B cell (primary cell): ENCODE measurements at regions of chr19 and their contacts with region 1.

Region 1: GRCh38 chr19:57682226-57682766 is 519 bp downstream of the ZNF551 start:
- DNase-seq: no peak
- ATAC-seq: no peak
- H3K4me3 ChIP-seq: peak overlapping the region; percentile 65 to 98 (median 90)
- H3K4me3 Mint-ChIP-seq: peak overlapping the region; percentile 98
- H3K27ac ChIP-seq: peak overlapping the region; percentile 50 to 57
- H3K27ac Mint-ChIP-seq: peak overlapping the region; percentile 91
- H3K4me1 ChIP-seq: peaks cover 13 to 25% of the 10 kb centered on the region in 2 donors
- H3K4me1 Mint-ChIP-seq: peaks cover 38% of the 10 kb centered on the region
- H3K27me3 ChIP-seq: peaks cover 0 to 4% (median 0%) of the 10 kb centered on the region in 4 experiments
- H3K27me3 Mint-ChIP-seq: peaks cover 15% of the 10 kb centered on the region
- CTCF ChIP-seq: no peak

Region 2: DNA sequence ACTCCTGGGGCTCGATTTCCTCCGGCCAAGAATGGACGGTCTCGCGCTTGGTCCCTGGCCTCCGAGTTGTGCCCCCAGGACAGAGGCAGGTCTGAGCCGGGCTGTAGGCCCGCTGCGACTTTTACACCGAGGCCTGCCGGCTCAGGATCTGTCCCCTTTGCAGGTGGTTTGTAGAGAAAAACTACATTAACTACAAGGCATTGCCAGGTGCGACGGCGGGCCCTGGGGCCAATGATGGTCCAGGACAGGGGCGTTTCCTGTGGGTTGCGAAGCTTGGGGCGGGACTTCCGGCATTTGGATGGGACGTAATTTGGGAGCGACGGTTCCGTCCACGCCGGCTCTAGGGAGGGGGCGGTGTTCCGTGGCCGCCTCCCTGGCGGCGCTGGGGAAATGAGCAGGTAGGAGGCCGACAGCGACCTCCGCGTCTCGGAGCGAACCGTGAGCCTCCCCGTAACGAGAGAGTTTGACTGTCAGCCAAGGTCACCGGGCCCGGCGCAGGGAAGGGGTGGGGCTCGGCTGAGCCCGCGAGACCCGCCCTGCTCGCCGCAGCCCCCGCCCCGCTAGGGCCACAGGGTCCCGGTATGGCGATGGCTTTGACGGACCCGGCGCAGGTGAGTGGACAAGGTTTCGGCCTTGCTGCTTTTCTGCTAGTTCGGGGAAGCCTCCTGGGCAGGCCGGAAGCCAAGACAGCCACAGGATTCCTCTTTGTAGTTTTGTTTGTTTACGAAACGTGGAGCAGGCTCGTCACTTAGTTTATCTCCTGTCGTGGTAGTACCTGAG is 441.8 kb before region 1 on chr19 and contains the start of gene ZNF805:
- CTCF ChIA-PET with region 1: no interaction called
- POLR2A ChIA-PET with region 1: no interaction called
- intact Hi-C with region 1: loop called (anchors 5 kb)
- DNase-seq: peak; percentile 97
- ATAC-seq: peak; percentile 93
- H3K4me3 ChIP-seq: peak within 1 kb of the TSS; percentile 64 to 99 (median 94)
- H3K4me3 Mint-ChIP-seq: peak within 1 kb of the TSS; percentile 95
- H3K27ac ChIP-seq: peak within 1 kb of the TSS; percentile 77 to 86
- H3K27ac Mint-ChIP-seq: peak within 1 kb of the TSS; percentile 94
- H3K4me1 ChIP-seq: peaks cover 19 to 20% of the 10 kb centered on the region in 2 donors
- H3K4me1 Mint-ChIP-seq: peaks cover 33% of the 10 kb centered on the region
- H3K27me3 ChIP-seq: no peaks in the 10 kb centered on the region
- H3K27me3 Mint-ChIP-seq: no peaks in the 10 kb centered on the region
- CTCF ChIP-seq: no peak
- total RNA-seq, gene ZNF805: 18.9 and 20.0 TPM in 2 replicates

Region 3: GRCh38 chr19:57410877-57411671 is 271.2 kb before region 1 on chr19 and contains the start of gene ZNF17:
- CTCF ChIA-PET with region 1: no interaction called
- POLR2A ChIA-PET with region 1: no interaction called
- intact Hi-C with region 1: loop called (anchors 1 kb)
- DNase-seq: peak; percentile 93
- ATAC-seq: peak; percentile 100
- H3K4me3 ChIP-seq: peak within 1 kb of the TSS; percentile 66 to 98 (median 89)
- H3K4me3 Mint-ChIP-seq: peak within 1 kb of the TSS; percentile 97
- H3K27ac ChIP-seq: peak within 1 kb of the TSS; percentile 22 to 77
- H3K27ac Mint-ChIP-seq: peak within 1 kb of the TSS; percentile 89
- H3K4me1 ChIP-seq: peaks cover 12 to 17% of the 10 kb centered on the region in 2 donors
- H3K4me1 Mint-ChIP-seq: peaks cover 26% of the 10 kb centered on the region
- H3K27me3 ChIP-seq: no peaks in the 10 kb centered on the region
- H3K27me3 Mint-ChIP-seq: no peaks in the 10 kb centered on the region
- CTCF ChIP-seq: no peak
- total RNA-seq, gene ZNF17: 25.8 and 30.7 TPM in 2 replicates

Region 4: DNA sequence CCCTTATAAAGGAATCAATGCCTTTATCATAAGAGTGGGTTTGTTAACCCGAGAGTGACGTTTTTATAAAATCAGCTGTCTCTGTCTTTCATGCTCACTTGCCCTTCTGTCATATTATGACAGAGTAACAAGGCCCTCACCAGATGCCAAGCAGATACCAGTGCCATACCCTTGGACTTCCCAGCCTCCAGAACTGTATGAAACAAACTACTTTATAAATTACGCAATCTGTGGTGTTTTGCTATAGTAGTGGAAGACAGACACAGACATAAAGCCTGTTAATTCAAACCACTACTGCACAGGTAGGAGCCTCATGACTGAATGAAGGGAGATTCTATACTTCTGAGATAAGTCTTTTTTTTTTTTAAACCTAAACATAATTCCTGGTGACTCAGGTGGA is 230.0 kb before region 1 on chr19:
- CTCF ChIA-PET with region 1: no interaction called
- POLR2A ChIA-PET with region 1: no interaction called
- intact Hi-C with region 1: no loop called
- DNase-seq: no peak
- ATAC-seq: no peak
- H3K4me3 ChIP-seq: no peak overlapping the region
- H3K4me3 Mint-ChIP-seq: no peak overlapping the region
- H3K27ac ChIP-seq: no peak overlapping the region
- H3K27ac Mint-ChIP-seq: no peak overlapping the region
- H3K4me1 ChIP-seq: no peaks in the 10 kb centered on the region
- H3K4me1 Mint-ChIP-seq: no peaks in the 10 kb centered on the region
- H3K27me3 ChIP-seq: no peaks in the 10 kb centered on the region
- H3K27me3 Mint-ChIP-seq: no peaks in the 10 kb centered on the region
- CTCF ChIP-seq: no peak

Region 5: DNA sequence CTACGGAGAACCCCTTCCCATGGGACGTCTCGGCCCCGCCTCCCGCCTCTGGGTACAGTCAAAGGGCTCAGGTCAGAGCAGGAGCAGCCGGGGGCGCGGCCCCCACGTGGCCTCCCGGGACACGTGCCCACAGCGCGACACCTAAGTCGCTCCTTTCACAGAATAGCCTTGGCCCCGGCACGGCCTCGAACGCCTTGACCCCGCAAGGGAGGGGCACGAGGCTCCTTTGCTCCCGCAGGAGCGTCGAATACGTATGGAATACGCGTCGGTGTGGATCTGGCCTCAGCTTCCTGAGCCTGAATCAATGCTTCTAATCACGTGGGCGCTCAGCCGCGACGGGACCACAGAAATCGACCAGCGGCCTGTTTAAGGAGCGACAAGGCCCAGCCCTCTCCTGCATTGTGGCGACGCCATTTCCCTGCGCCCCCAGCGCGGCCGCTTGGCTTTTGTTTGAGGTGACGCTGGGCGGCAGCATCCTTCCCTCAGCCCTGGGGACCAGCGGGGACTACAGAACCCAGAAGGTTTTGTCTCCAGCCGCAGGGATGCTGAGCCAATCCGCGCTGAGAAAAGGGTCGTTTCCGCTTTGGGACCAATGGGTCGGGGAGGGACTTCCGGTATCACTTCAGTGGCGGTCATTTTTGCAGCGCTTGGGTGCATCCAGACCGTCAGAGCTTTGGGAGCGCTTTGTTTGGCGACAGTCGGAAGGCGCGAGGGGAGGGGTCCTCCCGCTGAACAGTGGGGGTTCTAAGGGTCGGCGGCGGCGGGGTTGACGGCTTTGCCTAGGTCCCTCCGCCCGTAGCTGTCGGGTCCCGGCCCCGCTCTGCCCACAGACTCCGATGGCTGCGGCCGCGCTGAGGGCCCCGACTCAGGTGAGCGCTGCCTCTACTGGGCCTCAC is 98.5 kb before region 1 on chr19 and contains the start of gene ZIK1:
- CTCF ChIA-PET with region 1: no interaction called
- POLR2A ChIA-PET with region 1: no interaction called
- intact Hi-C with region 1: loop called (anchors 1 kb)
- DNase-seq: peak; percentile 96
- ATAC-seq: peak; percentile 89
- H3K4me3 ChIP-seq: peak within 1 kb of the TSS; percentile 70 to 92 (median 77)
- H3K4me3 Mint-ChIP-seq: peak within 1 kb of the TSS; percentile 99
- H3K27ac ChIP-seq: peak within 1 kb of the TSS; percentile 86 to 88
- H3K27ac Mint-ChIP-seq: peak within 1 kb of the TSS; percentile 96
- H3K4me1 ChIP-seq: peaks cover 20 to 27% of the 10 kb centered on the region in 2 donors
- H3K4me1 Mint-ChIP-seq: peaks cover 21% of the 10 kb centered on the region
- H3K27me3 ChIP-seq: no peaks in the 10 kb centered on the region
- H3K27me3 Mint-ChIP-seq: no peaks in the 10 kb centered on the region
- CTCF ChIP-seq: no peak
- total RNA-seq, gene ZIK1: 19.2 and 21.8 TPM in 2 replicates

Region 6: DNA sequence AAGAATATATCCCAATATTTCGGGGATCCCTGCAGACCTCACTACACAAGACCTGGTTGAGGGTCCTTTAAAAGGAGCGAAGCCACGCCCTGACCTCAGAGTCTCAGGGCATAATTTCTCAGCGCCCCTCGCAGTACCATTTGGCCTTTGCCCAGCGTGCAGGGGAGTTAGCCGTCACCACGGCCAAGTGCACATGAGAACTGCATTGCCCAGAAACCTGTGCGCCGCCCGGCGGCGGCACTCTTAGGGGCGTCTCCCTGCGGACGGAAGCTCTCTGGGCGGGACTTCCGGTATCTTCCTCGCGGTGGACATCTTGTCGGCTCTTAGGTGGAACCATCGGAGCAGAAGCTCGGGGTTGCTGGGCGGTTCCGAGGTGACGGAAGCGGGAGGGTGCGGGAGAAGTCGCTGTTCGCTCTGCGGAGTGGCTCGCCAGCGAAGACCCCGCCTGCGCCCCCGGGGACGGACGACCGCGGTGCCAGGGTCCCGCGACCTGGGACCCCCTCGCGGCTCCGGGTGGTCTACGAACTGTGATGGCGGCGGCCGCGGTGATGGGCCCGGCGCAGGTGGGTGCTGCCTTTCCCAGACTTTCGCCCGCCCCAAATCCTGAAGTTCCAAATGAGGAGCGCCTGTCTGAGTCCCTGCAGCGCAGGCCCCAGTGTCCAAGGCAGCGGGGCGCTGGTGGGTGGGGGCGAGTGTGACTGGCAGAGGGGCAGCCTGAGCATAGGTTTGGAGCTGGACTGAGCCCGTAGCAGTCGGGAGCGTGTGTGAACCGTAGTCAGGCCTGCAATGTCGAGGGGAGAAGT is 68.2 kb before region 1 on chr19 and contains the start of gene ZNF134:
- CTCF ChIA-PET with region 1: interaction called, 3 read pairs
- POLR2A ChIA-PET with region 1: no interaction called
- intact Hi-C with region 1: loop called (anchors 1 kb)
- DNase-seq: peak; percentile 94
- ATAC-seq: peak; percentile 99
- H3K4me3 ChIP-seq: peak within 1 kb of the TSS; percentile 45 to 97 (median 92)
- H3K4me3 Mint-ChIP-seq: peak within 1 kb of the TSS; percentile 93
- H3K27ac ChIP-seq: peak within 1 kb of the TSS; percentile 42 to 81
- H3K27ac Mint-ChIP-seq: peak within 1 kb of the TSS; percentile 90
- H3K4me1 ChIP-seq: peaks cover 14 to 21% of the 10 kb centered on the region in 2 donors
- H3K4me1 Mint-ChIP-seq: peaks cover 40% of the 10 kb centered on the region
- H3K27me3 ChIP-seq: no peaks in the 10 kb centered on the region
- H3K27me3 Mint-ChIP-seq: no peaks in the 10 kb centered on the region
- CTCF ChIP-seq: peak; percentile 34
- total RNA-seq, gene ZNF134: 38.1 and 38.9 TPM in 2 replicates

Region 7: DNA sequence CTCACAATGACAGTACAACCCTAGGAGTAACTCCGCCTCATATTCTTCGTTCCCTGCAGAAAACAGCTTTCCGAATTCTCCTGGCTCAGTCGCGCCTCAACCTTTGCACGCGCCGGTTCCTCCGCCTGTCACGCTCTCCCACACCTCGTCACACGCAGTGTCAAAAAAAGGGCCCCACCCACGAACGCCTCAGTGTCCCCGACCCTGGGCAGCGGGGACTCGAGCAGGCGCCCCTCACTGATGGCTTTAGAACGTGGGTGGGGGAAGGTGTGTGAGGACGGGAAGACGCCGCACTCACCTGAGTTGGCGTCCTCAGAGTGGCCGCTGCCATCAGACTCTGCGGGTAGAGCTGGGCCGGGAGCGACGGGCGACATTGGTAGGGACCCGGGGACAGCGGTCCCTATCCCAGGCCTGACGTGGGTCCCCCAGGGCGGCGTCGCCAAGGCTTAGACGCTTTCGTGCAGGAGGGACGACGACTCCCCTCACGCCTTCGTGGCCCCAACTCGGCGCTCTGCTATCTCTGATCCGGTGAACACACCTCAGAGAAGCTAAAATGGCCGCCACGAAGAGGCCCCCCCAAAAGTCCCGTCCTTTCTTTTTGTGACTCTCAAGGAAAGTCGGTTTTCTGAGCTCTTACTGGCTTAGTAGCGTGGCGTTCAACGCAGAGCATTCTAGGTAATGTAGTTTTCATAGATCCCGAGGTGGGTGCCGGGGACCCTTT is 26.5 kb after region 1 on chr19 and contains the start of gene ZNF154:
- CTCF ChIA-PET with region 1: no interaction called
- POLR2A ChIA-PET with region 1: interaction called, 8 read pairs
- intact Hi-C with region 1: loop called (anchors 1 kb)
- DNase-seq: peak; percentile 85
- ATAC-seq: peak; percentile 92
- H3K4me3 ChIP-seq: peak within 1 kb of the TSS; percentile 57 to 96 (median 81)
- H3K4me3 Mint-ChIP-seq: peak within 1 kb of the TSS; percentile 91
- H3K27ac ChIP-seq: peak within 1 kb of the TSS; percentile 97 to 99
- H3K27ac Mint-ChIP-seq: peak within 1 kb of the TSS; percentile 98
- H3K4me1 ChIP-seq: peaks cover 23 to 35% of the 10 kb centered on the region in 2 donors
- H3K4me1 Mint-ChIP-seq: peaks cover 46% of the 10 kb centered on the region
- H3K27me3 ChIP-seq: no peaks in the 10 kb centered on the region
- H3K27me3 Mint-ChIP-seq: no peaks in the 10 kb centered on the region
- CTCF ChIP-seq: no peak
- total RNA-seq, gene ZNF154: 40.4 and 42.8 TPM in 2 replicates

Region 8: GRCh38 chr19:57769345-57770131 is 87.2 kb after region 1 on chr19 and contains the start of gene ZNF586:
- CTCF ChIA-PET with region 1: no interaction called
- POLR2A ChIA-PET with region 1: no interaction called
- intact Hi-C with region 1: loop called (anchors 2 kb)
- DNase-seq: peak; percentile 91
- ATAC-seq: peak; percentile 99
- H3K4me3 ChIP-seq: peak within 1 kb of the TSS; percentile 65 to 86 (median 82)
- H3K4me3 Mint-ChIP-seq: peak within 1 kb of the TSS; percentile 94
- H3K27ac ChIP-seq: peak within 1 kb of the TSS; percentile 75 to 83
- H3K27ac Mint-ChIP-seq: peak within 1 kb of the TSS; percentile 90
- H3K4me1 ChIP-seq: peaks cover 23 to 49% of the 10 kb centered on the region in 2 donors
- H3K4me1 Mint-ChIP-seq: peaks cover 37% of the 10 kb centered on the region
- H3K27me3 ChIP-seq: no peaks in the 10 kb centered on the region
- H3K27me3 Mint-ChIP-seq: no peaks in the 10 kb centered on the region
- CTCF ChIP-seq: no peak
- total RNA-seq, gene ZNF586: 48.0 and 51.3 TPM in 2 replicates